Activated CD8-positive, alpha-beta T cell treated with anti-CD3 and anti-CD28 coated beads for 36 hours (primary cell): ENCODE measurements at regions of chr6 and their contacts with region 1.

Region 1: DNA sequence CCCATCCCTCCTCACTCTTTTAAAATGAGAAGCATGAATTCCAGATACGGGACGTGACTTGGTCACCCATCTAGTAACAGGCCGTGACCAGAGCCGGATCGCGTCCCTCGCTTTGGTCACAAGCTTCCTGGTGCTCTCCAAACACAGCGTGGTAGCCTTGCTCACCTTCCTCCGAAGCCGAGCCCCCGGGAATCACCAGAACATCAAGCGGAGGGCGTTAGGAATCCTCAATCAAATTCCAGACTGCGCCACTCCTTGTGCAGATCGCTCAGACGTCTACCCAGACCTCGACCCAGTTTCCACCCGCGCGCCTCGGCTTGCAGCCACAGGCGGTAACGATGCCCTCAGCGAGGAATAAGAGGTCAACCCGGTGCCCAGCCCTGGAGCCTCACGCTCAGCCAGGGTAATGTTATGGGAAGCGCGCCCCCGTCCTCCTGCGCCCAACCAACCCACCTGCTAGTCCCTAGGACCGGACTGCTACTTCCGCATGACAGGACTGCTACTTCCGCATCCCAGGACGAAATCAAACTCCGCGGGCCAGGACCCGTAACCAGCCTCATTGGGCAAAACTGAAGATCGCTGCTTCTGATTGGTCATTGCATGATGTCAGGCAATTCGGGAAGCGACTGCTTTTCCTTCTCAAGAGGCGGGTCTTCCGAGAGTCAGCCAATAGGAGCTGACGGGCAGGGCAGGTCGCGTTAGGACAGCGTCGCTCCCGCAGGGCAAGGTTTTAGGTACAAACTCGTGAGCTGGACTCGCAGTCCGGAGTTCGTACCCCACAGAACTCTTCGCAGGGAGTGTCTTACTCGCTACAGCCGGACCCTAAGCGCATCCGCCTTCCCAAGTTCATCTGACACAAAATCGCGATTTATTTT is at the start of gene MTFR2:
- DNase-seq: peak; percentile 96
- ATAC-seq: peak; percentile 96
- H3K4me3 Mint-ChIP-seq: peak within 1 kb of the TSS; percentile 91
- H3K27ac Mint-ChIP-seq: peak within 1 kb of the TSS; percentile 93
- H3K4me1 Mint-ChIP-seq: peaks cover 42% of the 10 kb centered on the region
- H3K27me3 Mint-ChIP-seq: no peaks in the 10 kb centered on the region
- CTCF ChIP-seq: no peak
- total RNA-seq, gene MTFR2: 20.9 to 23.9 TPM

Region 2: DNA sequence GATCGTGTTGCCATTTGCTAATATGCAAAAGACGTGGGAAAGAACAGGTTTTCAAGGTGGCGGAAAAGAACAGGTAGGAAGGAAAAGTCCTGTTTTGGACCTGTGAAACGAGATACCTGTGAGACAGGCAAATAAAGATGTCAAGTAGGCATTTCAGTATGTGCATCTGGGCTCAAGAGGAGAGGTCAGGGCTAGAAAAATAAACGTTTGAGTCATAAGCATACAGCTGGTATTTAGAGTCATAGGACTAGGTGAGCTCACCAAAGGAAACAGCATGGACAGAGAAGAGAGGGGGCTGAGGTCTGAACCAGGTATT is 14.9 kb before region 1 on chr6:
- CTCF ChIA-PET with region 1: interaction called, 3 read pairs
- POLR2A ChIA-PET with region 1: interaction called, 15 read pairs
- intact Hi-C with region 1: no loop called
- DNase-seq: no peak
- ATAC-seq: no peak
- H3K4me3 Mint-ChIP-seq: no peak overlapping the region
- H3K27ac Mint-ChIP-seq: no peak overlapping the region
- H3K4me1 Mint-ChIP-seq: peaks cover 8% of the 10 kb centered on the region
- H3K27me3 Mint-ChIP-seq: no peaks in the 10 kb centered on the region
- CTCF ChIP-seq: no peak

Region 3: GRCh38 chr6:136274062-136274461 is 24.0 kb after region 1 on chr6:
- CTCF ChIA-PET with region 1: interaction called, 3 read pairs
- POLR2A ChIA-PET with region 1: interaction called, 16 read pairs
- intact Hi-C with region 1: no loop called
- DNase-seq: no peak
- ATAC-seq: no peak
- H3K4me3 Mint-ChIP-seq: no peak overlapping the region
- H3K27ac Mint-ChIP-seq: peak overlapping the region; percentile 20
- H3K4me1 Mint-ChIP-seq: peaks cover 42% of the 10 kb centered on the region
- H3K27me3 Mint-ChIP-seq: no peaks in the 10 kb centered on the region
- CTCF ChIP-seq: no peak

Region 4: DNA sequence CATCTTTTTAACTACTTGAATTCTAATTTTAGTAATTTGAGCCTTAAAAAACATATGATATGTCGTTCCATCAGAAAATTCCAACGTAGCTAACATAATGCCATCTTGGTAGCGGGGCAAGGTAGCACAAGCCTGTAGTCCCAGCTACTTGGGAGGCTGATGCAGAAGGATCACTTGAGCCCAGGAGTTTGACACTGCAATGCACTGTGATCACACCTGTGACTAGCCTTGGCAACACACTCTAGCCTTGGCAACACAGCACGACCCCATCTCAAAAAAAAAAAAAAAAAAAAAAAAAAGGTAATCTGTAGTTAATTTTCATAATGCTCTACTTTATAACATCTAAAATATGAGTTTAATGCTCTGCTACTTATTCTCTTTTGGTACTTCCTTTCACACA is 32.9 kb after region 1 on chr6:
- CTCF ChIA-PET with region 1: interaction called, 5 read pairs
- POLR2A ChIA-PET with region 1: interaction called, 88 read pairs
- intact Hi-C with region 1: loop called (anchors 5 kb)
- DNase-seq: no peak
- ATAC-seq: no peak
- H3K4me3 Mint-ChIP-seq: peak overlapping the region; percentile 61
- H3K27ac Mint-ChIP-seq: peak overlapping the region; percentile 59
- H3K4me1 Mint-ChIP-seq: peaks cover 75% of the 10 kb centered on the region
- H3K27me3 Mint-ChIP-seq: no peaks in the 10 kb centered on the region
- CTCF ChIP-seq: no peak

Region 5: DNA sequence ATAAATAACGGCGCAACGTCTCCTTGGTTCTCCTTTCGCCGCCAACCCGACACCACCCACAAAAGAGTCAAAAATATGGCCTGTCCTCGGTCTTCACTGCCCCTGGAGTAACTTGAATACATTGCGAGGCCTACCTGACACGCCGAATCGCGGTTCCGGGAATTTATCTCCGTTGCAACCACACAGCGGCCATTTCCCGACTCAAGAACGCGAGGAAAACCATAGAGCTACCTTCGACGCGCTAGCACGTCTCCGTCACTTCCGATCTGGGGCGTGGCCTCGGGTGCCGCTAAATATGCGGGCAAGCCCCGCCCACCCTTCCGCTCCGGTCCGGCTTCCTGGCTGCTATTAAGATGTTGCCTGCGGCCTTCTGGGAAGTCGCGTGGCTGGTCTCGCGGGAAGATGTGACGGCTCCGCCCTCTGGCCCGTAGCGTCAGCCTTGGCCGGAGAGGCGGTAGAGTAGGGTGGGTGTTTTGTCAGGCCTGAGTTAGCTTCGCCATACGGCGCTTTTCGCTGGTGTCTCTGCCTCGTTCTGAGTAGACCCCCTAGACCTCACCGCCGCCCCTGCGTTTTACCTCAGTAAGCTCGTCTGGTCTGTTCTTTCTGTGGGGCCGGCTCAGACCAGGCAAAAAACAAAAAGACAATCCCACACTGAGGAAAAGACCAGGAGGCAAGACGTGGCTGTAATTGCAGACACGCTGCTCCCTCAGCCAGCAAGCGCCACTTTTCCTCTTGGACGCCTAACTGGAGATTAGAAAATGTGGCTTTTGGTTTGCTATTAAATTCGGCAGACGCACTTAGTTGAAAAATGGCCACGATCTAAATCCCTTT is 39.7 kb after region 1 on chr6 and contains the start of gene BCLAF1:
- CTCF ChIA-PET with region 1: interaction called, 4 read pairs
- POLR2A ChIA-PET with region 1: interaction called, 88 read pairs
- intact Hi-C with region 1: loop called (anchors 5 kb)
- DNase-seq: peak; percentile 100
- ATAC-seq: peak; percentile 85
- H3K4me3 Mint-ChIP-seq: peak within 1 kb of the TSS; percentile 91
- H3K27ac Mint-ChIP-seq: peak within 1 kb of the TSS; percentile 100
- H3K4me1 Mint-ChIP-seq: peaks cover 37% of the 10 kb centered on the region
- H3K27me3 Mint-ChIP-seq: no peaks in the 10 kb centered on the region
- CTCF ChIP-seq: no peak
- total RNA-seq, gene BCLAF1: 128 to 137 TPM